Activated B cell treated with CpG ODN at 0.5 μM for 24 hours (primary cell): ENCODE measurements at regions of chr13 and their contacts with region 1.

Region 1: GRCh38 chr13:35818633-35819067 is 312.5 kb downstream of the DCLK1 start:
- DNase-seq: no peak
- ATAC-seq: no peak
- H3K4me3 Mint-ChIP-seq: no peak overlapping the region
- H3K27ac Mint-ChIP-seq: no peak overlapping the region
- H3K4me1 Mint-ChIP-seq: no peaks in the 10 kb centered on the region
- H3K27me3 Mint-ChIP-seq: no peaks in the 10 kb centered on the region
- CTCF ChIP-seq: no peak

Region 2: GRCh38 chr13:33931397-33932311 is 1887.0 kb before region 1 on chr13:
- CTCF ChIA-PET with region 1: no interaction called
- POLR2A ChIA-PET with region 1: no interaction called
- intact Hi-C with region 1: loop called (anchors 5 kb)
- DNase-seq: no peak
- ATAC-seq: no peak
- H3K4me3 Mint-ChIP-seq: no peak overlapping the region
- H3K27ac Mint-ChIP-seq: no peak overlapping the region
- H3K4me1 Mint-ChIP-seq: no peaks in the 10 kb centered on the region
- H3K27me3 Mint-ChIP-seq: no peaks in the 10 kb centered on the region
- CTCF ChIP-seq: no peak